Activated CD4-positive, alpha-beta T cell treated with anti-CD3 and anti-CD28 coated beads, Interleukin-2, amount 10 ng/mL, durations not matched to agents 24 days and 14 days (primary cell): ENCODE measurements at regions of chr3 and their contacts with region 1.

Region 1: GRCh38 chr3:23740517-23740965 is 65.2 kb upstream of the UBE2E1 start:
- DNase-seq: peak; percentile 75
- H3K4me3 Mint-ChIP-seq: peak overlapping the region; percentile 4
- H3K27ac Mint-ChIP-seq: peak overlapping the region; percentile 68
- H3K4me1 Mint-ChIP-seq: peaks cover 10% of the 10 kb centered on the region
- H3K27me3 Mint-ChIP-seq: peaks cover 25% of the 10 kb centered on the region

Region 2: DNA sequence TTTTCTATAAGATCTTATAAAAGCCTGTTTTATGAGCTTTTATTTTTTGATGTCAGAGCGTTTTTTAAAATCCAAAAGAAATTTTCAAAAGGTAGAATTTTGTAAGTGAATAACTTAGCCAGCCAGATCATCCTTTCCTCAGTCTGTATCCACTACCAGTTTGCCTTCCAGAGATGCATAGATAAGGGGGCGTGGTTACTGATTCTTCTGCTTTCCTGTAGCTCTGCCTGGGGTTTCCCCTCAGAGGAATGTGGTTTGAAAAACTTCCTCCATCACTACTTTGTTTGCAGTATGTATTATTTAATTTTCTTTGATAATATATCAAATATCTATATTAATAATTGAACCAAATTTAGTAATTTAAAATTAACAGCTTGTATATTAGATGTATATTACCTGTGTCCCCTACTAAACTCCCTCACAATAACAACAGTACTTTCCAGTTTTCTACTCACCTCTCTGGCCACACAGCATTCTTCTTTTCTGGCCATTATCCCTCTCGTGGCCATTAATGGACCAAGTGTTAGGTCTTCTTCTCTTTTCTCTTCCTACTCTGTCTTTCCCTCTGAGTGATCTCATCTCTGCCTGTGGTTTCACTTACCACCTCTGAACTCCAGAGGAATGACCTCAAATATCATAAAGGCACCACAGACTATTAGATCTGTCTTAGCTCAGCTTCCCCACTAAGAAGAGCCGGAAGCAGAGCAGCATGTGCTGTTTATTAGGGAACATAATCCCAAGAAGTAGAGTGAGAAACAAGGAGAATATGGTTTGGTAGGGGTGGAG is 297.8 kb before region 1 on chr3:
- intact Hi-C with region 1: loop called (anchors 10 kb)
- DNase-seq: peak; percentile 71
- H3K4me3 Mint-ChIP-seq: peak overlapping the region; percentile 5
- H3K27ac Mint-ChIP-seq: no peak overlapping the region
- H3K4me1 Mint-ChIP-seq: peaks cover 23% of the 10 kb centered on the region
- H3K27me3 Mint-ChIP-seq: peaks cover 15% of the 10 kb centered on the region

Region 3: GRCh38 chr3:23726811-23727548 is 13.6 kb before region 1 on chr3:
- intact Hi-C with region 1: loop called (anchors 1 kb)
- DNase-seq: no peak
- H3K4me3 Mint-ChIP-seq: no peak overlapping the region
- H3K27ac Mint-ChIP-seq: no peak overlapping the region
- H3K4me1 Mint-ChIP-seq: peaks cover 4% of the 10 kb centered on the region
- H3K27me3 Mint-ChIP-seq: no peaks in the 10 kb centered on the region

Region 4: DNA sequence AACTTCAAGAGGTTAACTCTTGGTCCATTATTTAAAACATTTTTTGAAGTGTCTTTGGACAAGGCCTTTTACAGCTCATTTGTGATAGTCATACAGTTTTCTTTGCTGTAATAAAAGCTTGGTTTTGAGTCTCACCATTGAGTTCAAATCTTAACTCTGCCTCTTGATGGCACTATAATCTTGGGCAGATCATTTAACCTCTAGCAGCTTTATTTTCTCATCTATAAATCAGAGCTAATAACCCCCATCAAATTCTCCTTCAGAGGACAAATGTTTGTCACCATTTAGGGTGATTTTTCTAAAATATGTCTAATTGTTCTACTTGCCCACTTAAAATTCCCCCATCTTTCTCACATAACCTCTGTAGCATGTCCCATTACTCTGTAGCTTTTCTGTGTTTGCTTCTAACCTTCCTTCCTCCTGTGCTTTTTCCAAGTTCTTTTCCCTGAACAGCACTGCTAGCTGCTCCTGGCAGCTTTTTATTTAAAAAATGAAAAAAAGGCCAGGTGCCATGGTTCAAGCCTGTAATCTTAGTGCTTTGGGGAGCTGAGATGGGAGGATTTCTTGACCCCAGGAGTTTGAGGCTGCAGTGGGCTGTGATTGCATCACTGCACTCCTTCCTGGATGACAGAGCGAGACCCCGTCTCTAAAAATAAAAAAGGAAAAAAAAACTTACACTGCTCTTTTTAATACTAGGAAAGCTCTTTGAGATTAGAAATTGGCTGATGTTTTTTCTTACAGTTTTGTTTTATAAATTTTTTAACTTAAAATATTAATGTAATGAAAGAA is 93.7 kb after region 1 on chr3:
- intact Hi-C with region 1: no loop called
- DNase-seq: no peak
- H3K4me3 Mint-ChIP-seq: no peak overlapping the region
- H3K27ac Mint-ChIP-seq: no peak overlapping the region
- H3K4me1 Mint-ChIP-seq: peaks cover 18% of the 10 kb centered on the region
- H3K27me3 Mint-ChIP-seq: no peaks in the 10 kb centered on the region

Region 5: DNA sequence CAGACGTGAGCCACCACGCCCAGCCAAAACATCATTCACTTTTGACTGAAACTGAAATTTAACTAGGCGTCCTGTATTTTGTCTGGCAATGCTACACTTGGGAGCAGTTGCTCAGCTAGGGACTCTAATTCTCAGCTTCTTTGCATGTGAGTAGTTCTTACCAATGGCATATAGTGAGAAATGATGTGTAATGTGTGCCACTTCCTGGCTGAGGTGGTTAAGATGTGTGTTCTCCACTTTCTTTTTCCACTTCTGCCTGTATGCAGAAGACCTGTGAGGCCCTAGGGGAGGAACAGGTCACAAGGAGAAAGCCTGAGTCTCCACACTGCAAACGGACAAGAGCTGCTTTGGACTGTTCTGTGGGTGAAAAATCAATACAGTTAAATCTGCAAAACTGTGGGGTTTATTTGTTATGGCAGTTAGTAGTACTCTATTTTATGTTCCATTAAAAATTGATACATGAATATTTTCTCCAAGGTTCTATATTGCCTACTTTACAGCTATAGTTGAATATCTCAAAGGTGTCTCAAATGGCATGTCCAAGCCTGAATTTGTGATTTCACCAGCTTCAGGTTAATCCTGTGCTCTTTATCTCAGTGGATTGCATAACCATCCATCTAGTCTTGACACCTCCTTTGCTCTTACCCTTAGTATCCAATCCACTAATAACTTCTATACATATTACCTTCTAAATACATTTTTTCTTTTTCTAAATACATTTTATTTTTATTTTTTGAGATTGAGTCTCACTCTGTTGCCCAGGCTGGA is 263.8 kb after region 1 on chr3:
- intact Hi-C with region 1: loop called (anchors 1 kb)
- DNase-seq: peak; percentile 60
- H3K4me3 Mint-ChIP-seq: no peak overlapping the region
- H3K27ac Mint-ChIP-seq: no peak overlapping the region
- H3K4me1 Mint-ChIP-seq: peaks cover 5% of the 10 kb centered on the region
- H3K27me3 Mint-ChIP-seq: peaks cover 28% of the 10 kb centered on the region